HCT116 (cell line): ENCODE measurements at regions of chr20 and their contacts with region 1.

Region 1: DNA sequence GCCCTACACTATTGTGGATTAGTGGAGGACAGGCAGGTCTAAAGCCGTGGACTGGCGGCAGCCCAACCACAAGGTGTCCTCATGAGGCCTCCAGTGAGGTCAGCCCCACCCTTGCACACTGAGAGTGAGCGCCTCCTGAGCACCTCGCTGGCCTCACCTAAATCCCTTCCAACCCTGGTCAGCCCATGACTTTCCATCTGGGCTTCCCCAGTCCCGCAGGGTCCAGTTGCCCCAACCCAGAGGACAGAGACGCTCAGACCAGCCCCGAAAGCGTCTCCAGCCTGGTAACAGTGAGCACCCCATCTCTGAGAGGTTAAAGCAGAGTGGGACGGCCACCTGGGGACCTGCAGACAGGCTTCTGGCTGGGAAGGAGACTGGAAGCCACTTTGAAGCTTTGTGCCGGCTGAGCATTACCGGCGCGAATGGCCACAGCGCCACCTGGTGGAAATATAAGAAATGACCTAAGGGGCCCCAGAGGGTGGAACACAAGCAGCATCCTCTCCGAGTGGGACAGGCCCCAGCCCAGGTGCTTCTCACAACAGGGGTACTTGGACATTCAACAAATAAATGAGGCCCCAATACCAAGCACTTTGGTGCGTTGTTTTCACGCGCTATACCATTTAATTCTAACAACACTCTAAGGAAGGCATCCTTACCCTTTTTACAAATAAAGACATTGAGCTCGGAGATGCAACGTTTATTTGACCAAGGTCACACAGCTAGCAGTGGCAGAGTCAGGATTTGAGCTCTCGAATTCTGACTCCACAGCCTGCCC is 65.7 kb upstream of the TOP1 start:
- DNase-seq: peak; percentile 51
- ATAC-seq: peak; percentile 93
- H3K4me3 ChIP-seq: peak overlapping the region in 1 of 2 experiments; percentile 32; a peak in 1 of 4 replicates
- H3K27ac ChIP-seq: no peak overlapping the region; the same call in 1 of the 2 replicates
- H3K4me1 ChIP-seq: peaks cover 0 to 9% of the 10 kb centered on the region in 2 experiments; a peak in 3 of 4 replicates
- H3K27me3 ChIP-seq: no peaks in the 10 kb centered on the region
- CTCF ChIP-seq: peak; percentile 67 to 89 (median 79)
- POLR2A ChIP-seq: no peak
- RAD21 ChIP-seq: peak; percentile 89

Region 2: GRCh38 chr20:39190666-39191570 is 1772.0 kb before region 1 on chr20:
- CTCF ChIA-PET with region 1: no interaction called
- POLR2A ChIA-PET with region 1: no interaction called
- RAD21 ChIA-PET with region 1: no interaction called
- intact Hi-C with region 1: no loop called
- DNase-seq: peak; percentile 39
- ATAC-seq: peak; percentile 73
- H3K4me3 ChIP-seq: no peak overlapping the region
- H3K27ac ChIP-seq: no peak overlapping the region
- H3K4me1 ChIP-seq: peaks cover 0 to 11% of the 10 kb centered on the region in 2 experiments; a peak in 1 of 4 replicates
- H3K27me3 ChIP-seq: no peaks in the 10 kb centered on the region
- CTCF ChIP-seq: no peak
- POLR2A ChIP-seq: no peak
- RAD21 ChIP-seq: no peak

Region 3: DNA sequence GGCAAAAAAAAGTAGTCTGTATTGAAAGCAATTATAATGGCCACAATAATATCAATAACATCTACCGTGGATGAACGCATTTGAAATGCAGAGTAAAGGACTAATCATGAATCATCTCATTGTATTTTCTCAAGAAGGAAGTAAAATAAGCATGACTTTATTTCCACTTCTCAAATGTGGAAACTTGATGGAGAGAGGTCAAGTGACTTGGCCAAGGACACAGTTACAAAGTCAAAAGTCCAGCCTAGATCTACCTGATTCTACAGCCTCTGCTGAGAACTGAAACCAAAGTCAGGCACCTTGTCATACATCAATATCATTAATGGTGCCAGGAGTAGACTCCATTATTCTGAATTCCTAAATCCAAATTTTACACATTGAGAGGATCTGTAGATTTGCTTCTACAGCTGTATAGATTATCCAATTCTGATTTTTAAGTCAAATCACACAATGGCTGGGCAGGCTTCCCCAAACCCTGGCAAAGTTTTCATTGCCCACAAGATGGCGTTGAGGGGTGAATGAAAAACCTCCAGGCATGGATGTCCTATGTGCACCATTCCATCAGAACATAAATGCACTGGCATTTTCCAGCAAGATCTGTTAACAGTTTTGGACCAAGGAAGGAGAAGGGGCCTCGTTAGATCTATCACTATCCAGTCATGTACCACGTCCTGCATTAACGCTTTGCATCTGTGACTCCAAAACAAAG is 696.9 kb before region 1 on chr20:
- CTCF ChIA-PET with region 1: no interaction called
- POLR2A ChIA-PET with region 1: no interaction called
- RAD21 ChIA-PET with region 1: no interaction called
- intact Hi-C with region 1: loop called (anchors 5 kb)
- DNase-seq: no peak
- ATAC-seq: peak; percentile 57; the same call in 1 of the 2 replicates
- H3K4me3 ChIP-seq: no peak overlapping the region
- H3K27ac ChIP-seq: no peak overlapping the region
- H3K4me1 ChIP-seq: no peaks in the 10 kb centered on the region
- H3K27me3 ChIP-seq: no peaks in the 10 kb centered on the region
- CTCF ChIP-seq: peak; percentile 26 to 52 (median 39); a peak in 4 of 6 replicates
- POLR2A ChIP-seq: no peak
- RAD21 ChIP-seq: peak; percentile 57

Region 4: GRCh38 chr20:40370800-40371199 is 592.1 kb before region 1 on chr20:
- CTCF ChIA-PET with region 1: no interaction called
- POLR2A ChIA-PET with region 1: no interaction called
- RAD21 ChIA-PET with region 1: no interaction called
- intact Hi-C with region 1: no loop called
- DNase-seq: no peak
- ATAC-seq: no peak
- H3K4me3 ChIP-seq: no peak overlapping the region
- H3K27ac ChIP-seq: no peak overlapping the region
- H3K4me1 ChIP-seq: no peaks in the 10 kb centered on the region
- H3K27me3 ChIP-seq: no peaks in the 10 kb centered on the region
- CTCF ChIP-seq: no peak
- POLR2A ChIP-seq: no peak
- RAD21 ChIP-seq: no peak

Region 5: DNA sequence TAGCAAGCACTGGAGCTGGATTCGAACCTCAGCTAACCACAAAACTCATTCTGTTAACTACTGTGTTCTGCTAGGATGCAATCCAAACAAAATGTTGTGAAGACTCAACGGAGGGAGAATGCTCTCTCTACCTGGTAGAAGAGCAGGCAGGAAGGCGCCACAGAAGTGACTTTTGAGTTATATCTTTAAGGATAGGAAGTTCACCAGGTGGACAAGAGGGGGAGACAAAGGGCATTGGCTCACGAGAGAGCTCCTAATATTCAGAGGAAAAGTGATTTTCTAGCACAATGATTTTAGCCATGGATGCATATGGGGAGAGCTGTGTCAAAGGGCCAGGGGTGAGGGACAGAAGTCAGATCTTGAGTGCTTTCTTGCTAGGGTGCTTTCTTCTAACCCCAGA is 165.5 kb before region 1 on chr20:
- CTCF ChIA-PET with region 1: interaction called, 13 read pairs
- POLR2A ChIA-PET with region 1: no interaction called
- RAD21 ChIA-PET with region 1: interaction called in 1 of 2 experiments, 6 read pairs
- intact Hi-C with region 1: loop called (anchors 1 kb)
- DNase-seq: peak; percentile 23
- ATAC-seq: peak; percentile 91
- H3K4me3 ChIP-seq: no peak overlapping the region
- H3K27ac ChIP-seq: no peak overlapping the region
- H3K4me1 ChIP-seq: no peaks in the 10 kb centered on the region
- H3K27me3 ChIP-seq: peaks cover 29% of the 10 kb centered on the region
- CTCF ChIP-seq: peak; percentile 63 to 76 (median 68); a peak in 5 of 6 replicates
- POLR2A ChIP-seq: no peak
- RAD21 ChIP-seq: peak; percentile 72

Region 6: DNA sequence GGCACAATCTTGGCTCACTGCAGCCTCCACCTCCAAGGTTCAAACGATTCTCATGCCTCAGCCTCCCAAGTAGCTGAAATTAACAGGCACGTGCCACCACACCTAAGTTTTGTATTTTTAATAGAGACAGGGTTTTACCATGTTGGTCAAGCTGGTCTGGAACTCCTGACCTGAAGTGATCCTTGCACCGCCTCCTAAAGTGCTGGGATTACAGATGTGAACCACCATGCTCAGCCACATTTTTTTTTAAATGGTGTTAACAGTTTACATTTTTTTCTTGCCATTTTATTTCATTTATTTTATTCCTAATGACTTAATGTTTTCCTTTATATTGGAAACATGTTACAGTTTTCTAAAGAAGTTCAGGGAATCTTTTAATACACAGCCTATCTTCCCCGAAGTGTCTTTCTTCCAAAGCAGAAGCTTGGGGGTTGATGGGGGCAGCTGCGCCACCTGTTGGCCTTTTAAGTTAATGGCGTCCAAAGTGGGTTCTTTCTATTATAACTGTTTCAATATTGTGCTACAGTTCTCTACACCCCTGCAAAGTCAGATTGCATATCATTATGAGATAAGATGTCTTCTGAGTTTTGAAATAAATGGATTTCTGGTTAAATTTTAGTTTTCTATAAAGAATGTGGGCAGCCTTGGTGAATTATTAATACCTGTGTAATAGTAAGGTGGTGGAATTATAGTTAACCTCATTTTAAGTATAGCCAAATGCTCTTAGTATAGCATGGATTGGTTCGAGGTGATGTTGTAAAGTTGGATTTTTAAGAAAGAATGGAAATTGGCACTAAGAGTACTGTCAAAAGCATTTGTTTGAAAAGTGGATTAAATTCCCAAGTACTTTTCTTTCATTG is 132.4 kb after region 1 on chr20:
- CTCF ChIA-PET with region 1: interaction called, 4 read pairs
- POLR2A ChIA-PET with region 1: interaction called, 3 read pairs
- RAD21 ChIA-PET with region 1: no interaction called
- intact Hi-C with region 1: loop called (anchors 1 kb)
- DNase-seq: peak; percentile 18
- ATAC-seq: peak; percentile 82
- H3K4me3 ChIP-seq: no peak overlapping the region
- H3K27ac ChIP-seq: no peak overlapping the region; the same call in 1 of the 2 replicates
- H3K4me1 ChIP-seq: no peaks in the 10 kb centered on the region
- H3K27me3 ChIP-seq: no peaks in the 10 kb centered on the region
- CTCF ChIP-seq: peak; percentile 73 to 91 (median 85)
- POLR2A ChIP-seq: no peak
- RAD21 ChIP-seq: peak; percentile 78

Region 7: GRCh38 chr20:41339507-41340326 is 376.8 kb after region 1 on chr20:
- CTCF ChIA-PET with region 1: interaction called, 16 read pairs
- POLR2A ChIA-PET with region 1: no interaction called
- RAD21 ChIA-PET with region 1: interaction called in 1 of 2 experiments, 4 read pairs
- intact Hi-C with region 1: loop called (anchors 1 kb)
- DNase-seq: peak; percentile 76
- ATAC-seq: peak; percentile 84
- H3K4me3 ChIP-seq: peak overlapping the region; percentile 70 to 74
- H3K27ac ChIP-seq: no peak overlapping the region
- H3K4me1 ChIP-seq: peaks cover 6 to 21% of the 10 kb centered on the region in 2 experiments; a peak in 3 of 4 replicates
- H3K27me3 ChIP-seq: no peaks in the 10 kb centered on the region
- CTCF ChIP-seq: peak; percentile 93 to 96 (median 95)
- POLR2A ChIP-seq: no peak
- RAD21 ChIP-seq: peak; percentile 99